ENCODE measurements at regions of chr2 and their contacts with region 1.

Region 1: DNA sequence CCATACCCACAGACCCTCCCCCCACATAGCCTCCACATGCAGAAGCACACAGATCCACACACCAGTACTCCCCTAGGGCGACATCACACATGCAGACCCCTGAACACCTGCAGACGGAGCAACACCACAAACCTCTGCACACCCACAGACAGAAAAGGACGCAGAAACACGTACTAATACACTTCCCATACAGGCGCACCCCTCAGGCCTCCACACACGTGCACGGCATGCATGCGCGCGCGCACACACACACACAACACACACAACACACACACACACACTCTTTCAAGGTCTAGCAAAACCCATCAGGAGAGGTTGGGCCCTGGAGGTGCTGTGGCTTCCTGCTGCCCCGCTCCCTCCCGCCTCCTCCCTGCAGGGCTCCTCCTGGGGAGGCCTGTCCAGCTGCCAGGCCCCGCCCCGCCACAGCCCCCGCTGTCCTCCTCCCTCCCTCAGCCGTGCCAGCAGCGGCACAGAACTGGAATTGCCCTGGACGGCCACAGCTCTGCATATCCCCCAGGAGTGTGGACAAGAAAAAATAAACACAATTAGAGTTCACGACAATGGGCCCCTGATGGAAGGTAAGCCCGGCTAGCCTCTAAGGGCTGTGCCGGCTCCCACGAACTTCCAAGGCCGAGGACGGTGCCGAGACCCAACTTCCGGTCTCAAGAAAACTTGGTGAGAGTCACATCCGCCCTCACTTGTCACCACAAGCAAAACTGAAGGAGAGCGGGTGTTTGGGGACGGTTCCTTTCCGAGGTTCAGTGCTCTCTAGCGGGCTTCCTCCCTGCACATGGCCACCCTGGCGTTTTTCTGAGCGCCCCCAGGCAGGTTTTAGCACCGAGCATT is 6.8 kb downstream of the ZFP36L2 start:
- DNase-seq: peak; percentile 85
- H3K4me3 ChIP-seq: peak overlapping the region; percentile 20 to 35
- H3K27ac ChIP-seq: peak overlapping the region; percentile 98 to 99
- H3K4me1 ChIP-seq: peaks cover 24% of the 10 kb centered on the region
- H3K27me3 ChIP-seq: no peaks in the 10 kb centered on the region
- CTCF ChIP-seq: peak in 1 of 4 experiments; percentile 12
- POLR2A ChIP-seq: peak; percentile 38

Region 2: DNA sequence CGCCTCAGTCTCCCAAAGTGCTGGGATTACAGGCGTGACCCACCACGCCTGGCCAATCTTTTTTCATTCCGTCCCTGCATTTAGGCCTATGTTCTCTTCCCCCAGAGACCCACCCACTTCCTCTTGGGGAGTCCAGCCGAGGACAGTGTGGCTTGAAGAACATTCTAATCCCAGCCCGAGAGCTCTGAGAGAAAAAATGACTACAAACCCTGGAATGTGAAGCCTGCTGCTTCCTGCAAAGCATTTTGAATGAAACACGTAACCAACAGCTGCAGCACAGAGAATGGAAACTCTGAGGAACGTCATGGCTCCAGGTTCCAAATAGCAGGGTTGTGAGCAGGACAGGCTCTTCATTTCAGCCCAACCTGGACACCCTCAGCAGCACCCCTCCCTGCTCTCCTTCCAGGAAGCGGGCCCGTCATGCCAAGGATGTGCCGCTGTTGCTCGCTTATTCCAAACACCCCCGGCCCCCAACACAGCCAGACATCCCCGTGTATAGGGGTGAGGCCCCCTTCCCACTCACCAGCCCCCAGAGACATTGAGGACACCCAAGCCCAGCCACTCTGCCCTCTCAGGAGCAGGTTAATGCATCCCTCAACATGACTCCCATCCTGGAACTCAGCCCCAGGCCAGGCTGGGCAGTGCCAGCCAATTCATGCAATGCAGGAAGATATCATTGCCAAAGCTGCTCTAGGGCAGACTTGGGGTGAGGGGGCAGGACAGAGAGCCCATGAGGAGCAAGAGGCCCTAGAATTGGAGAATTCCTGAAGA is 133.0 kb before region 1 on chr2:
- intact Hi-C with region 1: loop called (anchors 5 kb)
- DNase-seq: peak; percentile 72
- H3K4me3 ChIP-seq: no peak overlapping the region
- H3K27ac ChIP-seq: peak overlapping the region; percentile 79 to 87
- H3K4me1 ChIP-seq: peaks cover 8% of the 10 kb centered on the region
- H3K27me3 ChIP-seq: no peaks in the 10 kb centered on the region
- CTCF ChIP-seq: no peak
- POLR2A ChIP-seq: no peak

Region 3: GRCh38 chr2:43158259-43158880 is 61.2 kb before region 1 on chr2:
- intact Hi-C with region 1: loop called (anchors 5 kb)
- DNase-seq: peak; percentile 81
- H3K4me3 ChIP-seq: no peak overlapping the region
- H3K27ac ChIP-seq: peak overlapping the region; percentile 79 to 87
- H3K4me1 ChIP-seq: peaks cover 13% of the 10 kb centered on the region
- H3K27me3 ChIP-seq: no peaks in the 10 kb centered on the region
- CTCF ChIP-seq: no peak
- POLR2A ChIP-seq: no peak

Region 4: GRCh38 chr2:43178602-43179542 is 40.7 kb before region 1 on chr2:
- intact Hi-C with region 1: loop called (anchors 2 kb)
- DNase-seq: peak; percentile 81
- H3K4me3 ChIP-seq: no peak overlapping the region
- H3K27ac ChIP-seq: peak overlapping the region; percentile 82 to 91
- H3K4me1 ChIP-seq: peaks cover 8% of the 10 kb centered on the region
- H3K27me3 ChIP-seq: no peaks in the 10 kb centered on the region
- CTCF ChIP-seq: no peak
- POLR2A ChIP-seq: peak; percentile 40

Measured in prostate gland (tissue), 2 donors.